Activated T-helper 1 cell treated with anti-CD3 and anti-CD28 coated beads, Interleukin-12 subunit alpha, Interleukin-12 subunit beta, Interleukin-2, Interleukin-4 antibody, amounts not matched to agents 30 ng/mL and 10 ng/mL and 1 ng/mL, durations not matched to agents 14 hours and 24 hours and 36 hours (primary cell): ENCODE measurements at regions of chr14 and their contacts with region 1.

Region 1: GRCh38 chr14:44961604-44962333 is at the starts of genes KLHL28 and TOGARAM1:
- DNase-seq: peak; percentile 96
- H3K4me3 Mint-ChIP-seq: no peak within 1 kb of the TSS
- H3K27ac Mint-ChIP-seq: no peak within 1 kb of the TSS
- H3K4me1 Mint-ChIP-seq: peaks cover 40% of the 10 kb centered on the region
- H3K27me3 Mint-ChIP-seq: no peaks in the 10 kb centered on the region
- total RNA-seq, gene KLHL28: 15.9 and 16.9 TPM in 2 replicates
- total RNA-seq, gene TOGARAM1: 9.3 TPM in 2 replicates

Region 2: GRCh38 chr14:44712024-44712815 is 249.5 kb before region 1 on chr14:
- intact Hi-C with region 1: no loop called
- DNase-seq: no peak
- H3K4me3 Mint-ChIP-seq: no peak overlapping the region
- H3K27ac Mint-ChIP-seq: no peak overlapping the region
- H3K4me1 Mint-ChIP-seq: no peaks in the 10 kb centered on the region
- H3K27me3 Mint-ChIP-seq: no peaks in the 10 kb centered on the region

Region 3: GRCh38 chr14:44767642-44768173 is 194.1 kb before region 1 on chr14:
- intact Hi-C with region 1: no loop called
- DNase-seq: no peak
- H3K4me3 Mint-ChIP-seq: no peak overlapping the region
- H3K27ac Mint-ChIP-seq: no peak overlapping the region
- H3K4me1 Mint-ChIP-seq: no peaks in the 10 kb centered on the region
- H3K27me3 Mint-ChIP-seq: no peaks in the 10 kb centered on the region

Region 4: DNA sequence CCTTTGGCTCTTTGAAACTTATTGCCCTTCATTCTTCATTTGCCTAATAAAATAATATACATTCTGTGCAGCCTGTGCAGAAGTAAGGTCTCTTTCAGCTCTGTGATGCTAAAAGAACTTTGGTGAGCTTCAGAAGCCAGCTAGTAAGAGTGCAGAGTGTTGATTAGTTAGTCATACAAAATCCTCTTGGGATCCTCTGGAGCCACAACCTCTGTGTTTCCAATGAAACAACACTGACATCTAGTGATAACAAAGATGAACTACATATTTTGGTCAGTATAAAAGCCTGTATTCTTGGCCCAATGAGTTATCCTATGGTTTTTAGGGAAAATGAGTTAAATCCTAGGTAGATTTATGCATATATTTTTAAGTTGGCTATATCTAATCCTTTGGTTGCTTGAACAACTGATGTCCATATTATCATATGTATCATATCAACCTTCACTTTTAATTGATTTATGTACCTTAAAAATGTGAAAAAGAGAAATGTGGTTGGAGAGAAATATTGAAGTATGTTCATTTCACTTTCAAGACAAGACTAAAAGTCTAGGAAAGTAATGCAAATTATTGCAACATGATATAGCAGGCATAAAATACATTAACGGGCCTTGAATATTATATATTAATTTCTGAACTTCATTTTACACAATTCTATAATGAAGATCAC is 158.4 kb before region 1 on chr14:
- intact Hi-C with region 1: no loop called
- DNase-seq: no peak
- H3K4me3 Mint-ChIP-seq: no peak overlapping the region
- H3K27ac Mint-ChIP-seq: no peak overlapping the region
- H3K4me1 Mint-ChIP-seq: no peaks in the 10 kb centered on the region
- H3K27me3 Mint-ChIP-seq: peaks cover 3% of the 10 kb centered on the region

Region 5: DNA sequence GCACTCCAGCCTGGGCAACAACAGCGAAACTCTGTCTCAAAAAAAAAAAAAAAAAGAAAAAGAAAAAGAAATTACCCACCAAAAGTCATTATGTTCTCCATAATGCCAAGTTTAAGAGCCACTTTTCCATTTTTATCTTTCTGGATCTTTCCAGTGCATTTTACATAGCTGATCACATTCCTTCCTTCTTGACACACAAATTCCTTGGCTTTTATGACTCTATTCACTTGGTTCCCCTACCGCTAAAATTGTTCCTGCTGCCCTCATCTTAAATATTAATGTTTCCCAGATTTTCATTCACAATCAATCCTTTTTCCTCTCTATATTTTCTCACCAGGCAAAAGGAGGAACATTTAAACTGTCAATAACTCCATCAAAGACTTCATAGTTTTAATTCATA is 20.2 kb before region 1 on chr14:
- intact Hi-C with region 1: loop called (anchors 2 kb)
- DNase-seq: no peak
- H3K4me3 Mint-ChIP-seq: no peak overlapping the region
- H3K27ac Mint-ChIP-seq: no peak overlapping the region
- H3K4me1 Mint-ChIP-seq: peaks cover 7% of the 10 kb centered on the region
- H3K27me3 Mint-ChIP-seq: no peaks in the 10 kb centered on the region

Region 6: GRCh38 chr14:45083971-45084722 is 122.4 kb after region 1 on chr14 and contains the start of gene PRPF39:
- intact Hi-C with region 1: loop called (anchors 1 kb)
- DNase-seq: peak; percentile 95
- H3K4me3 Mint-ChIP-seq: peak within 1 kb of the TSS; percentile 97
- H3K27ac Mint-ChIP-seq: peak within 1 kb of the TSS; percentile 95
- H3K4me1 Mint-ChIP-seq: peaks cover 57% of the 10 kb centered on the region
- H3K27me3 Mint-ChIP-seq: no peaks in the 10 kb centered on the region
- total RNA-seq, gene PRPF39: 51.2 and 55.7 TPM in 2 replicates

Region 7: GRCh38 chr14:45114327-45114726 is 152.6 kb after region 1 on chr14:
- intact Hi-C with region 1: loop called (anchors 1 kb)
- DNase-seq: no peak
- H3K4me3 Mint-ChIP-seq: no peak overlapping the region
- H3K27ac Mint-ChIP-seq: peak overlapping the region; percentile 70
- H3K4me1 Mint-ChIP-seq: peaks cover 14% of the 10 kb centered on the region
- H3K27me3 Mint-ChIP-seq: no peaks in the 10 kb centered on the region

Region 8: DNA sequence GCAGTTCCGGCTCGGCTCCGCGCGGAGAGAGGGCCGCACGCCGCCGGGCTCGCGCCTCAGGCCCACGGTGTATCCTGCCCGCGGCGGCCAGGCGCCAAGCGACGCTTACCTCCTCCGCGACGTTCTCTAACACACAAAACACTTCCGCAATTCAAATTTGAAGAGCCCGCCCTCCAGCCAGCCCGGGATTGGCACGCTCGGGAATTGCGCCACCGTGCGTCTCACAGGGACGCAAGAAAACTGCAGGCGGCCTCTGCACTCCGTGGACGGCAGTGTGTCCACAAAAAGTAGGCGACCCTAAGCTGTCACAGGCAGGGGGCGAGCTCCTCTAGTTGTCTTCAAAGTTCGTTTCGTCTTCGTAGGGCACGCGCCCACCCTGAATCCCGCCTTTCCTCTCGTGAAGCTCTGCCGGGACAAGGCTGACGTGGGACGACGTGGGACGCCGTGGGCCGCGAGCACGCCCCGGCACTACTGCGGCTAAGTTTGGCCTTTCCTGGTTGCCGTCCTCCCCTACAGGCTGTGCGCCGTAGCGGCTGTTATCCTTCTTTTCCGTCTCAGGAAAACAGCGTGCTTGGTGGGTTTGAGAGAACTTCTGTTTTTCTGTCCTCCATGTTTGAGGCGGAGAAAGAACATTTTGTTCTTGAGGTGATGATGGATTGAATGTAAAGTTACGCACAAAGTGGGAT is 291.4 kb after region 1 on chr14 and contains the start of gene MIS18BP1:
- intact Hi-C with region 1: loop called (anchors 1 kb)
- DNase-seq: peak; percentile 93
- H3K4me3 Mint-ChIP-seq: peak within 1 kb of the TSS; percentile 94
- H3K27ac Mint-ChIP-seq: peak within 1 kb of the TSS; percentile 98
- H3K4me1 Mint-ChIP-seq: peaks cover 16% of the 10 kb centered on the region
- H3K27me3 Mint-ChIP-seq: peaks cover 3% of the 10 kb centered on the region
- total RNA-seq, gene MIS18BP1: 66.4 and 66.6 TPM in 2 replicates